ENCODE measurements at regions of chr11 and their contacts with region 1.

Region 1: GRCh38 chr11:17207317-17208258 is at the start of gene PIK3C2A:
- DNase-seq: peak; percentile 97 to 98 (median 98)
- ATAC-seq: peak; percentile 96 to 98 (median 98)
- H3K4me3 ChIP-seq: peak within 1 kb of the TSS; percentile 61 to 98 (median 86)
- H3K27ac ChIP-seq: peak within 1 kb of the TSS; percentile 84 to 99 (median 96)
- H3K4me1 ChIP-seq: peaks cover 0 to 53% (median 30%) of the 10 kb centered on the region in 12 donors
- H3K27me3 ChIP-seq: no peaks in the 10 kb centered on the region
- CTCF ChIP-seq: no peak
- POLR2A ChIP-seq: peak; percentile 50 to 97
- total RNA-seq, gene PIK3C2A: 28.5 to 52.2 (median 34.9) TPM

Region 2: DNA sequence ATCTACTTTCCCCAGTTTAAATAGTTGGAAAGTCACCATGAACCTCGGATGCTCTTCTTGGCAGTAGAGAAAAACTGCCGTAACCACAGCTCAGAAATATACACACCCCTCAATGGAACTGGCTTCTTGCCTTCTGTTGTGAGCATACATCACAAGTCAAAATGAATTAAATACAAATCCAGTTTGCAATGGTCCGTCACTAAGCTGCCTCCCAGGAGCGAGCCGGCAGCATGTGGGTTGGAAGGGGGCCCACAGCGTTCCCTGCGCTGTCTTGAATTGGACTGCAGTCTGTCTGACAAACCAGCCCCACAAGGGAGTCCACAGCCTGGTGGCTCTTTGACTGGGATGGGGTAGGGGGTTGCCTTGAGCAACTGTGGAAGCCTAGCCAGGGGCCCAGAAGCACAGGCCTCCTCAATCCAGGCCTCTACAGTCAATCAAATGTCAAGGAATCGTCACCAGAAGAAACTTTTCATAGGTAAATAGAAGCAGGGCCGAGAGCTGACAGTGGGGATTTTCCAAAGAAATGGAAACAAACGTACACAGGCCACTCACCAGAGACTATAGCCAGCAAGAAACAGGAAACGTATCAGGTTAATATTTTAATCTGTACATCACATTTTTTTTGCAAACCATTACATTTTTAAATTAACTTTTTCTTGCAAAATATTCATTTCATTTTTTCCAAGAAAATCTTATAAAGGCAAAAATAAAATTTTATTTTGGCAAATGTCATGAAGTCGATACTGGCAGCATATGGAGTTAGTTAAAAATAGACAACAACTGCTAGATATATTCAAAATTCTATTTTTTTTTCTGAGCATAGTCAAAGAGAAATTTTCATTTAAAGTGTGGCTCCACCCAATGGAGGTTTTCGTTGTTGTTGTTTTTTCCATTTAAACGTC is 430.6 kb before region 1 on chr11:
- intact Hi-C with region 1: no loop called
- DNase-seq: no peak
- ATAC-seq: peak in 1 of 4 donors; percentile 26
- H3K4me3 ChIP-seq: no peak overlapping the region
- H3K27ac ChIP-seq: no peak overlapping the region
- H3K4me1 ChIP-seq: peaks cover 0 to 21% (median 0%) of the 10 kb centered on the region in 12 donors
- H3K27me3 ChIP-seq: no peaks in the 10 kb centered on the region
- CTCF ChIP-seq: no peak
- POLR2A ChIP-seq: no peak

Region 3: GRCh38 chr11:17077520-17078401 is 129.8 kb before region 1 on chr11 and contains the start of gene RPS13:
- intact Hi-C with region 1: loop called in 2 of 10 experiments (anchors 5 to 10 kb)
- DNase-seq: peak; percentile 97 to 98 (median 98)
- ATAC-seq: peak; percentile 98 to 99 (median 99)
- H3K4me3 ChIP-seq: peak within 1 kb of the TSS; percentile 58 to 99 (median 92)
- H3K27ac ChIP-seq: peak within 1 kb of the TSS; percentile 69 to 98 (median 94)
- H3K4me1 ChIP-seq: peaks cover 6 to 38% (median 24%) of the 10 kb centered on the region in 12 donors
- H3K27me3 ChIP-seq: no peaks in the 10 kb centered on the region
- CTCF ChIP-seq: no peak
- POLR2A ChIP-seq: peak in 1 of 2 donors; percentile 80
- total RNA-seq, gene RPS13: 614 to 853 (median 747) TPM

Region 4: DNA sequence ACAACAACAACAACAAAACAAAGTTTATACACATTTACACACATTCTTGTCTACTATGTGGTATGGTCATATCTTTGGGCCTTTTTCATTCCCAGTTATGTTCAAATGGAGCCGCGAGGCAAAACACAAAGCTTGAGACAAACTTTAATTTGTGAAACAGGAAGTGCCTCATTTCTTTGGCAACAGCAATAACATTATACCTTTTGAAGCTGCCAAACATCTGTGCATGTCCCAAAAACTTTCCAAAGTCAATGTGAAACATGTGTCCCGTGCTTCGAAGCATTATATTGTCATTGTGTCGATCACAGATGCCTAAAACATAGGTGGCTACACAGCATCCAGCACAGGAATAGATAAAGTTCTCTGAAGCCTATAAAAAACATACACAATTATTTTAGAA is 105.1 kb before region 1 on chr11:
- intact Hi-C with region 1: loop called in 1 of 10 experiments (anchors 10 kb)
- DNase-seq: no peak
- ATAC-seq: no peak
- H3K4me3 ChIP-seq: no peak overlapping the region
- H3K27ac ChIP-seq: peak overlapping the region in 1 of 12 donors; percentile 4
- H3K4me1 ChIP-seq: peaks cover 0 to 19% (median 0%) of the 10 kb centered on the region in 12 donors
- H3K27me3 ChIP-seq: no peaks in the 10 kb centered on the region
- CTCF ChIP-seq: no peak
- POLR2A ChIP-seq: no peak

Region 5: DNA sequence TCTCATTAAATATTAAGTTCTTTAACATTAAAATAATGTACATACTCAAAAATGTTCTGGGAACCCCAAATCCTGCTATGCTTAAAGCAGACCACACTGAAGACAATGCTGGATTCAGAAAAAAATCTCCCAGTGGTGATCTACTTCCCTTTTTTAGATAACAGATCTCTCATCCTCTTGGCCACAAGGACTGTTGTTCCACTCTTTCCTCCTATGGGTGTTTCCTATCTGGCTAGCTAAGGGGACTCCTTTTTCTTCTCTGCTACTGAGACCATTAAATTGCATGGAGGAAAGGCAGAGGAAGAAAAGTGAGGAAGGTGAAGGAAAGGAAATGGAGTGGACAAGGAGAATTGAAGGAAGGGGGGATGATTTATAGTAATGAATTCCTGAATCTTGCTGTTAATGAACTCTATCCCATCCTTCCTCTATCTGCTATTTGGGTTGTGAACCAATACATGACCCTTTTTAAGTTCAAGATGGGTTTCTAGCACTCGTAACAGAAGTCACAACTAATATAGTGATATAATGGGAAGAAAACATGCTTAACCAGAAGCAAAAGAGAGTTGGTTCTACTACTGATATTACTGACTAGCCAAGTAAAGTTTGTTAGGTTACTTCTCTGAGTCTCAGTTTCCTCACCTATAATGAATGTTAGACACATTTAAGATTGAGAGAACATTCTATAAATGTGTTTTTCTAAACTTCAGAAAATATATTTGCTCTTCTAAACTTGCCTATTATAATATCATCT is 53.0 kb before region 1 on chr11:
- intact Hi-C with region 1: loop called in 4 of 10 experiments (anchors 5 to 10 kb)
- DNase-seq: no peak
- ATAC-seq: peak in 3 of 4 donors; percentile 13 to 53 (median 24)
- H3K4me3 ChIP-seq: no peak overlapping the region
- H3K27ac ChIP-seq: peak overlapping the region in 10 of 12 donors; percentile 18 to 65 (median 39)
- H3K4me1 ChIP-seq: peaks cover 8 to 63% (median 44%) of the 10 kb centered on the region in 12 donors
- H3K27me3 ChIP-seq: no peaks in the 10 kb centered on the region
- CTCF ChIP-seq: no peak
- POLR2A ChIP-seq: no peak

Region 6: GRCh38 chr11:17164361-17165246 is 43.0 kb before region 1 on chr11:
- intact Hi-C with region 1: loop called in 3 of 10 experiments (anchors 2 to 10 kb)
- DNase-seq: no peak
- ATAC-seq: peak; percentile 59 to 89 (median 73)
- H3K4me3 ChIP-seq: no peak overlapping the region
- H3K27ac ChIP-seq: peak overlapping the region; percentile 26 to 89 (median 56)
- H3K4me1 ChIP-seq: peaks cover 3 to 65% (median 46%) of the 10 kb centered on the region in 12 donors
- H3K27me3 ChIP-seq: no peaks in the 10 kb centered on the region
- CTCF ChIP-seq: no peak
- POLR2A ChIP-seq: no peak

Region 7: DNA sequence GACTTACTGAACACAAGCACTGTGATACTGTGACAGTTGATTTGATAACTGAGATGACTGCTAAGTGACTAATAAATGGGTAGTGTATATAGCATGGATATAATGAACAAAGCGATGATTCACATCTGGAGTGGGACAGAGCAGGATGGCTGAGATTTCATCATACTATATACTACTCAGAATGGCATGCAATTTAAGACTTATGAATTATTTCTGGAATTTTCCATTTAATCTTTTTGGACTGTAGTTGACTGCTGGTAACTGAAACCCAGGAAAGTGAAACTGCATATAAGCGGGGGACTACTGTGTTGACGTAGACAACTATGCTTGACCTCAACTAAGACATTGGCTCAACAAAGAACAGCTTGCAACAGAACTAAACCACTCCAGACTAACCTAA is 48.9 kb after region 1 on chr11:
- intact Hi-C with region 1: no loop called
- DNase-seq: no peak
- ATAC-seq: no peak
- H3K4me3 ChIP-seq: no peak overlapping the region
- H3K27ac ChIP-seq: no peak overlapping the region
- H3K4me1 ChIP-seq: no peaks in the 10 kb centered on the region
- H3K27me3 ChIP-seq: no peaks in the 10 kb centered on the region
- CTCF ChIP-seq: no peak
- POLR2A ChIP-seq: no peak

Region 8: DNA sequence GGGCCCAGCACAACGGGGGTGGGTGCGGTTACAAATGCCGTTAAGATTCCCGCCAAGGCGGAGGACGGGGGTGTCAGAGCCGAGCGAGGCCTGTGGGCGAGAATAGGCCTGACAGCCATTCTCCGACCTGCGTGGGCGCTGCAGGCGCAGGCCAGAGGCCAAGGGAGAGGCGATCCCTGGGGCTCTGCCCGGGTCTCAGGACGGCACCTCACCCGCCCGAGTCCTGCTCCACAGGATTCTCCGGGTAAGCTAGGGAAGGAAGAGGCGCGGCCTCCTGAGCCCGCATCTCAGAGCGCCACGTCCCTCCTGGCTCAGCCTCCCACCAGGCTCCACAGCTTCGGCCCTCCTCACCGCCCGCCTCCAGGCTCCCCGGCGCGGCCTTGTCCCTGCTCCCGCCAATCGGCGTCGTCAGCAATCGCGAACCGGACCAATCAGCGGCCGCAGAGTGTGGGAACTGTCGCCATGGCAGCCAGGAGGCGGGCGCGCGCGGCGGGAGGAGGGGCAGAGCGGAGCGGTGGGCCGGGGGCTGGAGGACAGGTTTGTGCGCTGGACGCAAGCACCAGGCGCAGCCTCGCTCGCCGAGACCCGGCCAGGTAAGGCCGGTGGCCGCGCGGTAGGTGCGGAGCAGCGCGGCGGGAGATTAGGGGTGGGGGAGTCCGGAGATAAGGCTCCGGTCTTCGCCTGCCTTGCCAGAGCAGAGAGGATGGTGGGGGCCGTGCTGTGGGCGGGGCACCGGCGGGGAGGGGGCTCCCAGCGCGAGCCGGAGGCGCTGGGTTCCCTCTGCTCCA is 68.8 kb after region 1 on chr11 and contains the start of gene NUCB2:
- intact Hi-C with region 1: loop called in 1 of 10 experiments (anchors 5 kb)
- DNase-seq: peak; percentile 98 to 99 (median 98)
- ATAC-seq: peak; percentile 98 to 99 (median 99)
- H3K4me3 ChIP-seq: peak within 1 kb of the TSS; percentile 66 to 97 (median 86)
- H3K27ac ChIP-seq: peak within 1 kb of the TSS; percentile 76 to 96 (median 90)
- H3K4me1 ChIP-seq: peaks cover 0 to 45% (median 9%) of the 10 kb centered on the region in 12 donors
- H3K27me3 ChIP-seq: no peaks in the 10 kb centered on the region
- CTCF ChIP-seq: peak in 1 of 12 donors; percentile 2
- POLR2A ChIP-seq: peak in 1 of 2 donors; percentile 92
- total RNA-seq, gene NUCB2: 41.4 to 180 (median 85.4) TPM

Region 9: DNA sequence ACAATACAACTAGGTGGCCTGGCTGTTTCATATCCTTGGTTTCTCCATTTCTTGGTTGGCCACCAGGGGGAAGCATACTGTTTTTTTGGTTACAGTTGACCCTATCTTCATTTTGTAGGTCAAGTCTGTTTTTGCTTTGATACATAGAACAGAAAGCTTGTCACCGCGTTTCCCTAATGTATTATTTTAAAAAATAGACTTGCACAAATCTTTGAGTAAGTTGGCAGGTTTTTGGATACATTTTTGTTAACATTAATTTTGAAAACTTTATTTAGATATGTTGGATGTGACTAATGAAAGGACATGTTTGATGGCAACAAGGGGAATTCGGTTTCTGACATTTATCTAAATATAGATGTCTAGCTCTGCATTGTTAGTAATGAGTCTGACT is 147.0 kb after region 1 on chr11:
- intact Hi-C with region 1: loop called in 1 of 10 experiments (anchors 5 kb)
- DNase-seq: peak in 4 of 5 donors; percentile 35 to 65 (median 52)
- ATAC-seq: peak in 3 of 4 donors; percentile 48 to 62 (median 53)
- H3K4me3 ChIP-seq: peak overlapping the region in 4 of 12 donors; percentile 56 to 79 (median 70)
- H3K27ac ChIP-seq: no peak overlapping the region
- H3K4me1 ChIP-seq: peaks cover 0 to 34% (median 13%) of the 10 kb centered on the region in 12 donors
- H3K27me3 ChIP-seq: no peaks in the 10 kb centered on the region
- CTCF ChIP-seq: peak; percentile 49 to 78 (median 72)
- POLR2A ChIP-seq: no peak